ENCODE measurements at regions of chr3 and their contacts with region 1.

Region 1: GRCh38 chr3:15215996-15216395 is 9.9 kb downstream of the CAPN7 start:
- DNase-seq: no peak
- ATAC-seq: no peak
- H3K4me3 ChIP-seq: no peak overlapping the region
- H3K4me3 Mint-ChIP-seq: no peak overlapping the region
- H3K27ac ChIP-seq: no peak overlapping the region
- H3K27ac Mint-ChIP-seq: no peak overlapping the region
- H3K4me1 ChIP-seq: peaks cover 4% of the 10 kb centered on the region
- H3K4me1 Mint-ChIP-seq: peaks cover 30% of the 10 kb centered on the region
- H3K27me3 ChIP-seq: no peaks in the 10 kb centered on the region
- H3K27me3 Mint-ChIP-seq: no peaks in the 10 kb centered on the region
- CTCF ChIP-seq: no peak

Region 2: GRCh38 chr3:15859507-15860013 is 643.6 kb after region 1 on chr3:
- CTCF ChIA-PET with region 1: no interaction called
- POLR2A ChIA-PET with region 1: no interaction called
- intact Hi-C with region 1: loop called in 1 of 2 experiments (anchors 5 kb)
- DNase-seq: peak; percentile 45 to 89 (median 63)
- ATAC-seq: peak; percentile 77
- H3K4me3 ChIP-seq: peak overlapping the region; percentile 74
- H3K4me3 Mint-ChIP-seq: peak overlapping the region; percentile 100
- H3K27ac ChIP-seq: no peak overlapping the region
- H3K27ac Mint-ChIP-seq: peak overlapping the region; percentile 93
- H3K4me1 ChIP-seq: peaks cover 15% of the 10 kb centered on the region
- H3K4me1 Mint-ChIP-seq: peaks cover 41% of the 10 kb centered on the region
- H3K27me3 ChIP-seq: no peaks in the 10 kb centered on the region
- H3K27me3 Mint-ChIP-seq: no peaks in the 10 kb centered on the region
- CTCF ChIP-seq: no peak